Calu3 (cell line): ENCODE measurements at regions of chr2 and their contacts with region 1.

Region 1: GRCh38 chr2:183093857-183094657 is 15.5 kb downstream of the DUSP19 start:
- DNase-seq: no peak
- H3K4me3 Mint-ChIP-seq: no peak overlapping the region
- H3K27ac Mint-ChIP-seq: no peak overlapping the region
- H3K4me1 Mint-ChIP-seq: peaks cover 7% of the 10 kb centered on the region
- H3K27me3 Mint-ChIP-seq: no peaks in the 10 kb centered on the region
- CTCF ChIP-seq: no peak

Region 2: GRCh38 chr2:182784777-182785176 is 309.3 kb before region 1 on chr2:
- CTCF ChIA-PET with region 1: no interaction called
- intact Hi-C with region 1: loop called (anchors 10 kb)
- DNase-seq: no peak
- H3K4me3 Mint-ChIP-seq: no peak overlapping the region
- H3K27ac Mint-ChIP-seq: no peak overlapping the region
- H3K4me1 Mint-ChIP-seq: no peaks in the 10 kb centered on the region
- H3K27me3 Mint-ChIP-seq: no peaks in the 10 kb centered on the region
- CTCF ChIP-seq: no peak

Region 3: GRCh38 chr2:183782436-183782835 is 688.4 kb after region 1 on chr2:
- CTCF ChIA-PET with region 1: no interaction called
- intact Hi-C with region 1: no loop called
- DNase-seq: no peak
- H3K4me3 Mint-ChIP-seq: no peak overlapping the region
- H3K27ac Mint-ChIP-seq: no peak overlapping the region
- H3K4me1 Mint-ChIP-seq: no peaks in the 10 kb centered on the region
- H3K27me3 Mint-ChIP-seq: no peaks in the 10 kb centered on the region
- CTCF ChIP-seq: no peak